Activated CD8-positive, alpha-beta memory T cell treated with anti-CD3 and anti-CD28 coated beads, Interleukin-2, amount 10 ng/mL, durations not matched to agents 7 days and 5 days (primary cell): ENCODE measurements at regions of chr18 and their contacts with region 1.

Region 1: GRCh38 chr18:51029694-51030536 is at the start of gene SMAD4:
- DNase-seq: peak; percentile 98
- ATAC-seq: peak; percentile 88
- H3K4me3 Mint-ChIP-seq: peak within 1 kb of the TSS; percentile 95
- H3K27ac Mint-ChIP-seq: peak within 1 kb of the TSS; percentile 94
- H3K4me1 Mint-ChIP-seq: peaks cover 52% of the 10 kb centered on the region
- H3K27me3 Mint-ChIP-seq: no peaks in the 10 kb centered on the region
- total RNA-seq, gene SMAD4: 66.8 to 72.7 TPM

Region 2: DNA sequence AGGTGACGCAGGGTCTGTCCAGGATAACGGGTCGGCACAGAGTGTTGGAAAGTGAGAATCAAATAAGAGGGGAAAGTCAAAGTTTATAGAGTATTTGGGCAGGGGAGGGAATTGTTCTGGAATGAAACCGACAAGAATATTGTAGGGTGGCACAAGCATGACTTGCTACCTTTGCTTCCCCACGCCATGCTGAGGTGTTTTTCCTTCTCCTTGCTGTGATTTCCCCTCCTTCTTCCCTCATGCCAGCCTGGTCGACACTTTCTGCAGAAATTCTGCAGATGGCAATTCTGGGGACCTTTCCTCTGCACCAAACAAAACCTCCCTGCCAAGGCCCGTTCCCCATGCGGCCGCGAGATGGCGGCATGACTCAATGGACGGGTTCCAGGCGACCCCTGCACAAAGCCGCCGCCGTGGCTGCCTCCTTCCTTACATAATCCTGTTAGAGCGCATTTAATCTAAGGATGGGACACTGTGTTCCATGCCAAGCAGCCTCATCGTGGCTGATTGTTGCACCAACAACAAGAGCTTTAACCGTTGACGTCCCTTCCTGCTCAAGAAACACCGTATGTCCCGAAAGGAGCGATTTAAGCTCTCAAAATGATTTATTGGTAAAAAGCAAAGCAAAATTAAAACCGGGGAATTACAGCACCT is 210.1 kb before region 1 on chr18 and contains the start of gene MRO:
- CTCF ChIA-PET with region 1: interaction called, 10 read pairs
- DNase-seq: peak; percentile 84
- ATAC-seq: peak; percentile 99
- H3K4me3 Mint-ChIP-seq: no peak within 1 kb of the TSS
- H3K27ac Mint-ChIP-seq: no peak within 1 kb of the TSS
- H3K4me1 Mint-ChIP-seq: no peaks in the 10 kb centered on the region
- H3K27me3 Mint-ChIP-seq: peaks cover 18% of the 10 kb centered on the region
- total RNA-seq, gene MRO: not detected

Region 3: DNA sequence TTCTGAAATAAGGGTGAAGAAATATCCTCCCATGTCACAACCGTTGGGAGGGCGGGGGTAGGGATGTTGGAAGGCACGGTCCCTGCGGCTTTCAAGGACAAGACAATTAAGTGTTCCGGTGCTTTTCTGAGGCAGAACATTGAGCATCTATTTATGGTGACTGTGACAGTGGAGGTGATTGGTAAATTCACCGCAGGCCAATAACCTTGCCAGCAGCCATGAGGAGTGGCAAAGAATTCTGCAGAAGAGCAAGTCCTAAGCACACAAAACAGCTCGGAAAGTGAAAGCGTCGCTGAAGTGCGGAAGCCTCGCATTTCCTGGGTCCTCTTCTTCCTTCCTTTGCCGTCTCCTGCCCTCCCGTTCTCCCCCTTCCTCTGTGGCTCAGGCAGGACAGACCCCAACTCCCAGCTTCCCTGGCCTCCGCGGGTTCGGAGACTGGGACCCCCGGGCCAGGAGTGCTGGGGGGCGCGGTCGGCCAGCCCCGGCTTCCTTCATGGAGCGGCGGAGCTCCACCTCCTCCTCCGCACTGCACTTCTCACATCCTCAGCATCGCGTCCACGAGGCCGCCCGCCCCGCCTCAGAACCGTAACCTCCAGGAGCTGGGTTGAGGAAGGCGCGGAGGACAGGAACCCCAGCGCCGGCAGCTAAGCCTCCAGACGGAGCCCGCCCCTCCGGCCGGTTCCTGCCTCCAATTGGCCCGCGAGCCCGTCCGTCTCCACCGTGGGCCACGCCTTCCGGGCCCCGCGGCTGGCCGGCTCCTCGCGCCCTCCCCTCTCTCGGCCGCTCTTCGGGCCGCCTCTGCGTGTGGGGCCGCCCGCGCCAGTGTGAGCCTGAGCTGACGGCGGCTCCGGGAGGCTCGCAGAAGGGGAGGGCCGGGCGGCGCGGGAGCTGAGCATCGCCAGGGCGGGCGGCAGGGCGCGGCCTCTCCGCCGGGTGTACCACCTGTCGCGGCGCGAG is 151.3 kb before region 1 on chr18 and contains the start of gene ME2:
- CTCF ChIA-PET with region 1: interaction called, 11 read pairs
- DNase-seq: peak; percentile 94
- ATAC-seq: peak; percentile 94
- H3K4me3 Mint-ChIP-seq: peak within 1 kb of the TSS; percentile 94
- H3K27ac Mint-ChIP-seq: peak within 1 kb of the TSS; percentile 98
- H3K4me1 Mint-ChIP-seq: peaks cover 22% of the 10 kb centered on the region
- H3K27me3 Mint-ChIP-seq: peaks cover 4% of the 10 kb centered on the region
- total RNA-seq, gene ME2: 77.2 to 86.9 TPM

Region 4: GRCh38 chr18:51009072-51009471 is 20.8 kb before region 1 on chr18:
- CTCF ChIA-PET with region 1: no interaction called
- DNase-seq: no peak
- ATAC-seq: no peak
- H3K4me3 Mint-ChIP-seq: no peak overlapping the region
- H3K27ac Mint-ChIP-seq: no peak overlapping the region
- H3K4me1 Mint-ChIP-seq: no peaks in the 10 kb centered on the region
- H3K27me3 Mint-ChIP-seq: no peaks in the 10 kb centered on the region

Region 5: DNA sequence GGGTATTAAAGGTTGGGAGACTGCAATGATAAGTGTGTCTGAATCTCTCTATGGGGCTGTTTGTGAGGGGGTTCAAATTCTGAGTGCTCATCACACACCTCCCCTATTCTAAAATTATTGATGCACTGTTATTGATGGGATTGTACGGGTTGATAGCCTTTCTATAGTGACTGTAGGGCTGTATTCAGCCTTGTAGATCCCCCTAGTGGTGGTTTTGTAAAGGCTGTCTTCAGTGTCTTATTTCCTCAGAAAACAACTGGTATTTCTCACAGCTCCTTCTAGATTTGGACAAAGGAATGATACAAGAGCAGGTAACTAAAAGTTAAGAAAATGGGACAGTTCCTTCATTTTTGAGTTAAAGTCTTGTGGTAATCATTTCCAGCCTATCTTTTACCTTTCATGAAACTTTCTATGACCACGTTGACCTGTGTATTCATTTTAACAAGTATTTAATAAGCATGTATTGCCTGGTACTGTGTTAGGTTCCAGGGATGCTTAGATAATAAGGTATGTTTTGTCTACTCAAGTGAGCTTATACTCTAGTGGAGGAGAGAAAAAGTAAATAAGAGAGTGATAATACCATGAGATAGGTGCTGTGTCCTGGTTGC is 21.3 kb after region 1 on chr18:
- CTCF ChIA-PET with region 1: interaction called, 18 read pairs
- DNase-seq: no peak
- ATAC-seq: peak; percentile 84
- H3K4me3 Mint-ChIP-seq: no peak overlapping the region
- H3K27ac Mint-ChIP-seq: peak overlapping the region; percentile 50
- H3K4me1 Mint-ChIP-seq: peaks cover 24% of the 10 kb centered on the region
- H3K27me3 Mint-ChIP-seq: no peaks in the 10 kb centered on the region